Activated B cell treated with CpG ODN at 0.5 μM for 24 hours (primary cell): ENCODE measurements at regions of chr6 and their contacts with region 1.

Region 1: GRCh38 chr6:81752138-81752920 is at the start of gene TENT5A:
- DNase-seq: peak; percentile 82
- ATAC-seq: peak; percentile 73
- H3K4me3 Mint-ChIP-seq: peak within 1 kb of the TSS; percentile 96
- H3K27ac Mint-ChIP-seq: peak within 1 kb of the TSS; percentile 97
- H3K4me1 Mint-ChIP-seq: peaks cover 40% of the 10 kb centered on the region
- H3K27me3 Mint-ChIP-seq: peaks cover 2% of the 10 kb centered on the region
- CTCF ChIP-seq: no peak
- total RNA-seq, gene TENT5A: 7.5 and 9.4 TPM in 2 replicates

Region 2: DNA sequence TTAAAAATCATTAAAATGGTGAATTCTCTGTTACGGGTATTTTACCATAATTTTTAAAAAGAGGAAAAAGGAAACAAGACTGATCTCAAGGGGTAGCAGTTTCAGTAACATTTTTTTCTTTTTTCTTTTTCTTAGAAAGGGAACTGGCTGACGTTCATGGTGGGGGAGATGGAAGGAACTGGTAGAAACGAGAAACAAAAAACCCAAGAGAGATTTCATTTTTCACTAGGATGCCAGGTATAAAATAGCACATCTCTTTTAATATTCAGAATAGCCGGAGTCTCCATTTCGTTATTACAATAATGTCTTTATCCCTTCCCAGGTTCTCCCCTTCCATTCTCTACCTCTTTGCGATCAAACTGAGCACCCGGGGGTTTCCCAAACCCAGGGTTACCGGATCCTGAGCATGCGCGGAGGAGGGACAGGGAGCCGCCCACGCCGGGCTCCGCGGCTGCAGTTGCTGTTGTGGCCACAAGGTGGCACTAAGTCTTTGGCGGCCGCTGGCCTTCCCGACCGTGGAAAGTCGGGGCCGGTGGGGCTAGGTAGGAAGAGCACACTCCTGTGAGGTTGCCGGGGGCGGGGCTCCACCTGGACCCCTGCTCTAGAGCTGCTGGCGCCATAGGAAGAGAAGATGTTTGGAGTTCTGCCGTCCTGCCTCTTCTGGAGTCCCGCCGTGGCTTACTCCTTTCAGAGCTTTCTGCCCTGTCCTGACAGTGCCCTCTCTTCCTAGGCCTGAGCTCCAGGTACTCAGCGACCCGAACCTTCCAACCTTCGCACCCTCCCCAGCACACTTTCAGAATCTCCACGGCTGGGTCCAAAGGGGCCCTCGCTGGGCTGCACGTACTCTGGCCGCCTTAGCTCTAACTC is 1974.4 kb before region 1 on chr6:
- CTCF ChIA-PET with region 1: no interaction called
- POLR2A ChIA-PET with region 1: no interaction called
- intact Hi-C with region 1: loop called (anchors 1 kb)
- DNase-seq: peak; percentile 79
- ATAC-seq: peak; percentile 95
- H3K4me3 Mint-ChIP-seq: peak overlapping the region; percentile 79
- H3K27ac Mint-ChIP-seq: peak overlapping the region; percentile 38
- H3K4me1 Mint-ChIP-seq: peaks cover 8% of the 10 kb centered on the region
- H3K27me3 Mint-ChIP-seq: no peaks in the 10 kb centered on the region
- CTCF ChIP-seq: peak; percentile 78

Region 3: GRCh38 chr6:80004173-80005072 is 1747.9 kb before region 1 on chr6 and contains the start of gene TTK:
- CTCF ChIA-PET with region 1: no interaction called
- POLR2A ChIA-PET with region 1: interaction called, 3 read pairs
- intact Hi-C with region 1: loop called (anchors 1 kb)
- DNase-seq: peak; percentile 82
- ATAC-seq: peak; percentile 100
- H3K4me3 Mint-ChIP-seq: peak within 1 kb of the TSS; percentile 93
- H3K27ac Mint-ChIP-seq: peak within 1 kb of the TSS; percentile 86
- H3K4me1 Mint-ChIP-seq: peaks cover 20% of the 10 kb centered on the region
- H3K27me3 Mint-ChIP-seq: no peaks in the 10 kb centered on the region
- CTCF ChIP-seq: no peak
- total RNA-seq, gene TTK: 1.9 and 2.3 TPM in 2 replicates

Region 4: GRCh38 chr6:80338201-80338836 is 1414.0 kb before region 1 on chr6:
- CTCF ChIA-PET with region 1: interaction called, 23 read pairs
- POLR2A ChIA-PET with region 1: no interaction called
- intact Hi-C with region 1: loop called (anchors 1 kb)
- DNase-seq: peak; percentile 58
- ATAC-seq: peak; percentile 76
- H3K4me3 Mint-ChIP-seq: no peak overlapping the region
- H3K27ac Mint-ChIP-seq: no peak overlapping the region
- H3K4me1 Mint-ChIP-seq: peaks cover 4% of the 10 kb centered on the region
- H3K27me3 Mint-ChIP-seq: no peaks in the 10 kb centered on the region
- CTCF ChIP-seq: peak; percentile 79

Region 5: DNA sequence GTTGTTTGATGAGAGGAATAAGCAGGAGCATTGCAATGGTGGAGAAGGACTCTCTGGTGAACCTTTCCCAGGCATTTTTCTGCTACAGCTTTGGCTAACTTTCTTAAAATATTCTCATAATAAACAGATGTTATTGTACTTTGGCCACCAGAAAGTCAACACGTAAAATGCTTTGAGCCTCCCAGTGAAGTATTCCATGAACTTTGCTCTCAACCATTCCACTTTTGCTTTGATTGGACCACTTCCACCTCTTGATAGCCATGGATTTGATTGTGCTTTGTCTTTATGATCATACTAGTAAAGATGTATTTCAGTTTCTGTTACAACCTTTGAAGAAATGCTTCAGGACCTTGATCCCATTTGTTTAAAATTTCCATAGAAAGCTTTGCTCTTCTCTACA is 240.9 kb before region 1 on chr6:
- CTCF ChIA-PET with region 1: no interaction called
- POLR2A ChIA-PET with region 1: no interaction called
- intact Hi-C with region 1: no loop called
- DNase-seq: no peak
- ATAC-seq: no peak
- H3K4me3 Mint-ChIP-seq: no peak overlapping the region
- H3K27ac Mint-ChIP-seq: no peak overlapping the region
- H3K4me1 Mint-ChIP-seq: no peaks in the 10 kb centered on the region
- H3K27me3 Mint-ChIP-seq: no peaks in the 10 kb centered on the region
- CTCF ChIP-seq: no peak

Region 6: GRCh38 chr6:81601918-81602317 is 150.4 kb before region 1 on chr6:
- CTCF ChIA-PET with region 1: no interaction called
- POLR2A ChIA-PET with region 1: no interaction called
- intact Hi-C with region 1: loop called (anchors 5 kb)
- DNase-seq: no peak
- ATAC-seq: no peak
- H3K4me3 Mint-ChIP-seq: no peak overlapping the region
- H3K27ac Mint-ChIP-seq: no peak overlapping the region
- H3K4me1 Mint-ChIP-seq: peaks cover 12% of the 10 kb centered on the region
- H3K27me3 Mint-ChIP-seq: no peaks in the 10 kb centered on the region
- CTCF ChIP-seq: no peak

Region 7: GRCh38 chr6:81766482-81767069 is 14.2 kb after region 1 on chr6:
- CTCF ChIA-PET with region 1: no interaction called
- POLR2A ChIA-PET with region 1: no interaction called
- intact Hi-C with region 1: no loop called
- DNase-seq: no peak
- ATAC-seq: no peak
- H3K4me3 Mint-ChIP-seq: no peak overlapping the region
- H3K27ac Mint-ChIP-seq: no peak overlapping the region
- H3K4me1 Mint-ChIP-seq: no peaks in the 10 kb centered on the region
- H3K27me3 Mint-ChIP-seq: peaks cover 5% of the 10 kb centered on the region
- CTCF ChIP-seq: no peak

Region 8: DNA sequence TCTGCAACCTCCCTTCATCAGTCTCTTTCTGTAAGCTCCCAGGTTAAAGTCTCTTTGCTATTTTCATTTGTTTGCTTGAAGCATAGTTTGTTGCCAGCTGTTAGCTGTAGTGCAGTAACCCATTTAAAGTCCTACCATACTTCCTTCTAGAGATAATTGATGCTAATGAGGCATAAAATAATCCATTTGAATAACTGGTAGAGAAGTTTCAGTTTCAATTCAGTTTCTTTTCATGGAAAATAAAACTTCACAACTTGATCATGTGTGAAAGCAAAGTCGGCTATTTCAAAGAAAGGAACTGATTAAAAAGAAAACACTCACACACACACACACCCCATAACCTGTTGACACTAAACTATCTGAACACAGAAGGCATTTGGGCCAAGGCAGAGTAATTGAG is 68.7 kb after region 1 on chr6:
- CTCF ChIA-PET with region 1: no interaction called
- POLR2A ChIA-PET with region 1: interaction called, 5 read pairs
- intact Hi-C with region 1: loop called (anchors 1 kb)
- DNase-seq: no peak
- ATAC-seq: peak; percentile 66
- H3K4me3 Mint-ChIP-seq: peak overlapping the region; percentile 55
- H3K27ac Mint-ChIP-seq: peak overlapping the region; percentile 65
- H3K4me1 Mint-ChIP-seq: peaks cover 36% of the 10 kb centered on the region
- H3K27me3 Mint-ChIP-seq: no peaks in the 10 kb centered on the region
- CTCF ChIP-seq: no peak

Region 9: GRCh38 chr6:83067448-83068413 is 1315.4 kb after region 1 on chr6 and contains the start of gene DOP1A:
- CTCF ChIA-PET with region 1: no interaction called
- POLR2A ChIA-PET with region 1: no interaction called
- intact Hi-C with region 1: loop called (anchors 1 kb)
- DNase-seq: peak; percentile 92
- ATAC-seq: peak; percentile 80
- H3K4me3 Mint-ChIP-seq: peak within 1 kb of the TSS; percentile 92
- H3K27ac Mint-ChIP-seq: peak within 1 kb of the TSS; percentile 92
- H3K4me1 Mint-ChIP-seq: peaks cover 56% of the 10 kb centered on the region
- H3K27me3 Mint-ChIP-seq: no peaks in the 10 kb centered on the region
- CTCF ChIP-seq: peak; percentile 85
- total RNA-seq, gene DOP1A: 24.2 and 30.8 TPM in 2 replicates